B cell (primary cell): ENCODE measurements at regions of chr17 and their contacts with region 1.

Region 1: DNA sequence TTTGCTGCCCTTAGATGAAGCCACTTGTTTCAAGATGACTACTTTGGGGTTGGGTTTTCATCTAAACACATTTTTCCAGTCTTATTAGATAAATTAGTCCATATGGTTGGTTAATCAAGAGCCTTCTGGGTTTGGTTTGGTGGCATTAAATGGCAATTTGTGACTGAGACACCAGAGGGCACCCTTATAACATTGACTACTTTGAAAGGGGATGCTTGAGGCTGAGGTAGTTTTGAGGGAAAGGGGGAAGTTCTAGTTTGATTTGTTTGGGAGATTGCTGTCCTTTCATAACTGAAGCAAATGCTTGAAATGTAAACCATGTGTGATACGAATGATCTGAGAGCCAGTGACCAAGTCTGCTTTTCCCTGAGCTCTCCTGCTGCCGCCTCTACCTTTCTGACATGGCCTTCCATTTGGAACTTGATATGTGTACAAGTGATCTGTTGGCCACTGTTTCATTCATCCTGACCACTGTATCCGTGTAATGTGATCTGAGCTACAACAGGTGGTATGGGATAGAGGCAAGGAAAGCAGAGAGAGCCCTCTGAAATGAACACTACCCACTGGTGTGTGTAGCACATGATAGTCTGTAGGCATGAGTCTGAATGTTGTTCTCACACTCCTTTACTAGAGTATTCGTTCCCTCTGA is 5.8 kb upstream of the RARA start:
- DNase-seq: peak; percentile 86
- ATAC-seq: peak; percentile 81
- H3K4me3 ChIP-seq: no peak overlapping the region
- H3K4me3 Mint-ChIP-seq: no peak overlapping the region
- H3K27ac ChIP-seq: no peak overlapping the region
- H3K27ac Mint-ChIP-seq: no peak overlapping the region
- H3K4me1 ChIP-seq: peaks cover 5 to 6% of the 10 kb centered on the region in 2 donors
- H3K4me1 Mint-ChIP-seq: peaks cover 7% of the 10 kb centered on the region
- H3K27me3 ChIP-seq: no peaks in the 10 kb centered on the region
- H3K27me3 Mint-ChIP-seq: no peaks in the 10 kb centered on the region
- CTCF ChIP-seq: peak; percentile 83

Region 2: GRCh38 chr17:40323391-40324381 is 20.6 kb after region 1 on chr17:
- CTCF ChIA-PET with region 1: interaction called, 119 read pairs
- POLR2A ChIA-PET with region 1: interaction called, 4 read pairs
- intact Hi-C with region 1: loop called (anchors 1 kb)
- DNase-seq: peak; percentile 94
- ATAC-seq: peak; percentile 32
- H3K4me3 ChIP-seq: peak overlapping the region; percentile 48 to 94 (median 67)
- H3K4me3 Mint-ChIP-seq: peak overlapping the region; percentile 97
- H3K27ac ChIP-seq: peak overlapping the region; percentile 96
- H3K27ac Mint-ChIP-seq: peak overlapping the region; percentile 100
- H3K4me1 ChIP-seq: peaks cover 92 to 100% of the 10 kb centered on the region in 2 donors
- H3K4me1 Mint-ChIP-seq: peaks cover 95% of the 10 kb centered on the region
- H3K27me3 ChIP-seq: no peaks in the 10 kb centered on the region
- H3K27me3 Mint-ChIP-seq: no peaks in the 10 kb centered on the region
- CTCF ChIP-seq: no peak

Region 3: GRCh38 chr17:40340880-40341807 is 38.0 kb after region 1 on chr17:
- CTCF ChIA-PET with region 1: interaction called, 39 read pairs
- POLR2A ChIA-PET with region 1: no interaction called
- intact Hi-C with region 1: loop called (anchors 1 kb)
- DNase-seq: peak; percentile 95
- ATAC-seq: peak; percentile 76
- H3K4me3 ChIP-seq: peak overlapping the region; percentile 51 to 84 (median 71)
- H3K4me3 Mint-ChIP-seq: peak overlapping the region; percentile 91
- H3K27ac ChIP-seq: peak overlapping the region; percentile 67 to 88
- H3K27ac Mint-ChIP-seq: peak overlapping the region; percentile 92
- H3K4me1 ChIP-seq: peaks cover 70 to 85% of the 10 kb centered on the region in 2 donors
- H3K4me1 Mint-ChIP-seq: peaks cover 74% of the 10 kb centered on the region
- H3K27me3 ChIP-seq: no peaks in the 10 kb centered on the region
- H3K27me3 Mint-ChIP-seq: no peaks in the 10 kb centered on the region
- CTCF ChIP-seq: no peak

Region 4: DNA sequence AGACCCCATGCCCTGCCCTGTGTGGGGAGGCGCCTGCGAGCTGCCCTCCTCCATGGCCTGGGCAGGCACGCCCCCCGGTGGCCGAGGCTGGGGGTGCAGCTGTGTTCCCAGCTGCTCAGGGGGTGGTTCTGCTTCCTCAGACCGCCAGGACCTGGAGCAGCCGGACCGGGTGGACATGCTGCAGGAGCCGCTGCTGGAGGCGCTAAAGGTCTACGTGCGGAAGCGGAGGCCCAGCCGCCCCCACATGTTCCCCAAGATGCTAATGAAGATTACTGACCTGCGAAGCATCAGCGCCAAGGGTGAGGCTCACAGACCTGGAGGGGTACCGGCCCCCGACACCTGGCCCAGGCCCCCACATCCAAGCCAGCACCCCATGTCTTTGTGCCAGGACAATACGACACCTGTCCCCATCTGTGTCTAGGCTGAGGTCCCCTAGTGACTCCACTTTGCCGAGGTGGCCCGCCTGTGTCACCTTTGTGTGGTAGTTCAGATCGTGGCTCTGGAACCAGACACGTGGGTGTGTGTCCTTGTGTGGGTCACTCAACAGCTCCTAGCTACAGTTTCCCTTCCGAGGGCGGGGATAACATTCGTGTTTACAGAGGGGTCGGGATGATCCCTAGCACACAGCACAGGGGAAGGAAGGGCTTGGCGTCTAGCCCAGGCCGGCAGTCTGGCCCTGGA is 52.1 kb after region 1 on chr17:
- CTCF ChIA-PET with region 1: interaction called, 871 read pairs
- POLR2A ChIA-PET with region 1: interaction called, 13 read pairs
- intact Hi-C with region 1: loop called (anchors 1 kb)
- DNase-seq: peak; percentile 86
- ATAC-seq: peak; percentile 72
- H3K4me3 ChIP-seq: no peak overlapping the region
- H3K4me3 Mint-ChIP-seq: no peak overlapping the region
- H3K27ac ChIP-seq: no peak overlapping the region
- H3K27ac Mint-ChIP-seq: peak overlapping the region; percentile 50
- H3K4me1 ChIP-seq: peaks cover 22 to 37% of the 10 kb centered on the region in 2 donors
- H3K4me1 Mint-ChIP-seq: peaks cover 36% of the 10 kb centered on the region
- H3K27me3 ChIP-seq: peaks cover 0 to 7% (median 0%) of the 10 kb centered on the region in 4 experiments
- H3K27me3 Mint-ChIP-seq: no peaks in the 10 kb centered on the region
- CTCF ChIP-seq: peak; percentile 98